Left ventricle myocardium superior (tissue), 1 donor: ENCODE measurements at regions of chr12 and their contacts with region 1.

Region 1: DNA sequence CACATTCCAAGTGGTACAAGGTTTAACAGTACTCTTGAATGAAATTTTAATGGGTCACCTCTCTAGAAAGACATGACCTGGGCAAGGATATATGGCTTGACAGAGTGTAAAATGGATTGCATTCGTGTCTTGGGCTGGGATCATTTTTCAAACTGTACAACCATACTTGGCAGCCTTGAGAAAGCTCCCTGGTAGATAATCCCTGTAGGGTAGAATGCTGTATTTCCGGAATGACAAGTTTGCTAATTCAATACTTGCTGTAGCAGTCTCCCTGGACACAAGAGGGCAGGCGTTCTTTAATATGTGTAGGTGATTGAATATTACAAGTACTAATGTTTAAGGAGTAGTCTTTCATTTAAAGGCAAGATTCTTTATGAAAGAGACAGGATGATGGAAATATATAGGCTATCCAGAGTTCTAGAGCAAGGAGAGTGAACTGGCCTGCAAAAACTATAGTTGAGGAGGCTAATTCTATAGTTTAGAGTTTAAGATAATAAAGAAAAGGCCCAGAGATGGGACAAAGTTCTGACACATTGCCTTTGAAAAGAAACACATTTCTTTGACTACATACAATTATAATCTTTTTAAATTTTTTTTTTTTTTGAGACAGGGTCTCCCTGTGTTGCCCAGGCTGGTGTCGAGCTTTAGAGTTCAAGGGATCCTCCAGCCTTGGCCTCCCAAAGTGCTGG is 53.4 kb downstream of the PLBD1 start:
- DNase-seq: no peak
- ATAC-seq: peak; percentile 75

Region 2: GRCh38 chr12:14618983-14619382 is 104.7 kb after region 1 on chr12:
- intact Hi-C with region 1: loop called (anchors 5 kb)
- DNase-seq: no peak
- ATAC-seq: peak; percentile 60